ENCODE measurements at regions of chr12 and their contacts with region 1.

Region 1: GRCh38 chr12:7060353-7060954 is at the start of gene C1S:
- DNase-seq: peak; percentile 69 to 90
- ATAC-seq: peak; percentile 96 to 98 (median 97)
- H3K4me3 ChIP-seq: peak within 1 kb of the TSS; percentile 59
- H3K27ac ChIP-seq: peak within 1 kb of the TSS; percentile 69
- H3K4me1 ChIP-seq: peaks cover 4% of the 10 kb centered on the region
- H3K27me3 ChIP-seq: no peaks in the 10 kb centered on the region
- CTCF ChIP-seq: peak; percentile 84
- total RNA-seq, gene C1S: 49.0 to 98.5 (median 75.6) TPM

Region 2: DNA sequence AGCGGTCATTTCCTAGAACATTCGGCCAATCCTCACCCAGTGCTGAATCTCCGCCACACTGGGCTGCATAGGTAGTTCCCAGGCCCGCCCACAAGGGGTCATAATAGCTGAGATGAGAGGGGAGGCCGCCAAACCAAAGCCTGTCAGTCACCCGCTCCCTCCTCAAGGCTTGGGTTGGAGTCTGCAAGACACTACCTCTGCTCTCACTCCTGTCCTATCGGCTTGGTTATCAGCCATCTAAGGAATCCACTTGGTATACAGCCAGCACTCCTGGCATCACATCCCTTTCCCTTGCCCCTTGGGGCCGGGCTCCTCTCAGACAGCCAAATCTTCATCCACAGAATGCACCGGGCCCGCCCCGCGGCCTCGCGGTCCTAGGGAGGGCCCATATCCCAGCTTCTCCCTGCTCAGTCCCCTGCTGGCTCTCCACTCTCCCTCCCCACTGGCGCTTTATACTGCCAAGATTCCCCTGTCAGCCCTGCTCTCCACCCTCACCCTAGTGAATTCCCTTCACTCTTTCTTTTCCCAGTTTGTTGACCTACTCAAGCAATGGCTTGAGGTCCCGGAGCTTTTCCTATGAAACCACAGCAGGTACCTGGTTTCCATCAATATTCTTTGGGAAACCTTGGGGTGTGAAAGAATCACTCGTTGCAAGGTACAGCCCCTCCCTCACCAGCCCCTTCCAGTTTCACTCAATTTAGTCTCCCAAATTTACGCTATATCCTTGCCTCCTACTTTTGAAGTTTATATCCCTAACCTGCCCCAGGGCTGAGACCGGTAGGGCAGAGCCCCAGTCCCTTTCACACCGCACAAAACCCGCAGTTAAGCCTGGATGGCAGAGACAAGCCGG is 506.1 kb before region 1 on chr12:
- intact Hi-C with region 1: no loop called
- DNase-seq: peak; percentile 84 to 89
- ATAC-seq: peak; percentile 41 to 59 (median 50)
- H3K4me3 ChIP-seq: peak overlapping the region; percentile 95
- H3K27ac ChIP-seq: peak overlapping the region; percentile 100
- H3K4me1 ChIP-seq: peaks cover 49% of the 10 kb centered on the region
- H3K27me3 ChIP-seq: no peaks in the 10 kb centered on the region
- CTCF ChIP-seq: peak; percentile 57

Region 3: DNA sequence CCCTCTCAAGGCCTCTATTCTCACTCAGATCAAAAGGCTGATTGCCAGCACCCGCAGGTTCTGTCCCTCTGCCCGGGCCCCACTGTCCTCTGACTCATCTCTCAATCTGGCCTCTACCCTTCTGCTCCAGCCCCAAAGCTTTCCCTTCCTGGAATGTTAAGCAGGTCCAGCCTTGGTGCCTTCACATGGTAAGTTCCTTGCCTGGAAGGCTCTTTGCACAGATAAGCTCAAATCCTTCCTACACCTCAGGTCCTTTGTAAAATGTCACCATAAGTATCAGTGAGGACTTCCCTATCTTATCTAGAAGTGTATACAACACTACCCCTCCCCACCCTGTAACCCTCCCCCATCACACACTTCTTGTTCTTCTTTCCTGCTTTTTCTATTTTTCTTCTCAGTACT is 64.4 kb before region 1 on chr12:
- intact Hi-C with region 1: no loop called
- DNase-seq: peak; percentile 58 to 77
- ATAC-seq: peak; percentile 77 to 85 (median 83)
- H3K4me3 ChIP-seq: no peak overlapping the region
- H3K27ac ChIP-seq: peak overlapping the region; percentile 44
- H3K4me1 ChIP-seq: peaks cover 34% of the 10 kb centered on the region
- H3K27me3 ChIP-seq: no peaks in the 10 kb centered on the region
- CTCF ChIP-seq: no peak

Region 4: DNA sequence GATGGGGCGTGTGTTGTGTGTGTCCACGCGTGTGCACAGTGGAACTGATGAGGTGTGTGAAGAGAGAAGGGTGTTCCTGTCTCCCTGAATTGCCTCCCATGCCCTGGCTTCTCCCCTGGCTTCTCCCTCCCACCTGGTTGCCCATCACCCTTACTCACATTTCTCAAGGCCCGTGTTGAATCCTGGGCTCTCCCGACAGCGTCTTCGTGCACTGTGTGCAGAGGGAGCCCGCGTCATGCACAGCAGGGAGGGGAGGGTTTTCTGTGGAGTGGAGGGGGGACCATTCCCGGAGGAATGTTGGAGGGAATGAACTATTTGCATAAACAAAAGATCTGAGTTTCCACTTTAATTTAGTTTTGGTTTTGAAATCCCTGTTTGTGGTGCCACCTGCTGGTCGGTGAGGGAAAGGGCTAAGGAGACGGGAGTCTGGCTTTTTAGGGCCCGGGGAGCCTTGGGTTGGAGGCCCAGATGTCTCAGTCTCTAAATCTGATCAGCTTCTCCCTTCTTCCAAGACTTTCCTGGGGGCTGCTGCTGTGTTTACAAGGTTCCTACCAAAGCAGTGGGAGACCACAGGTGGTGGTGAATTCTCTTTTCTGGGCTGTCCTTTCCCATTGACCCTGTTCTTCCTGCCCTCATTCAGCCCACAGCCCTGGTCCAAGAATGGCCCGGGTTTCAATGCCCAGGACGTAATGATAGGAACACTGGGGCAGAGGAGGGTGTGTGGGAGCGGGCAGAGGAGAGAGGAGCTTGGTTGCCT is 32.0 kb after region 1 on chr12 and contains the start of gene C1R:
- intact Hi-C with region 1: loop called (anchors 1 to 2 kb)
- DNase-seq: peak; percentile 80 to 89
- ATAC-seq: peak; percentile 57 to 73 (median 63)
- H3K4me3 ChIP-seq: peak within 1 kb of the TSS; percentile 65
- H3K27ac ChIP-seq: peak within 1 kb of the TSS; percentile 58
- H3K4me1 ChIP-seq: peaks cover 11% of the 10 kb centered on the region
- H3K27me3 ChIP-seq: no peaks in the 10 kb centered on the region
- CTCF ChIP-seq: peak; percentile 91
- total RNA-seq, gene C1R: 63.2 to 70.9 (median 68.1) TPM

Region 5: GRCh38 chr12:7108796-7109571 is 48.5 kb after region 1 on chr12 and contains the start of gene C1RL:
- intact Hi-C with region 1: loop called (anchors 1 kb)
- DNase-seq: peak; percentile 93 to 95
- ATAC-seq: peak; percentile 87 to 93 (median 88)
- H3K4me3 ChIP-seq: peak within 1 kb of the TSS; percentile 75
- H3K27ac ChIP-seq: peak within 1 kb of the TSS; percentile 80
- H3K4me1 ChIP-seq: peaks cover 14% of the 10 kb centered on the region
- H3K27me3 ChIP-seq: no peaks in the 10 kb centered on the region
- CTCF ChIP-seq: peak; percentile 98
- total RNA-seq, gene C1RL: 14.6 to 17.0 (median 15.5) TPM

Region 6: DNA sequence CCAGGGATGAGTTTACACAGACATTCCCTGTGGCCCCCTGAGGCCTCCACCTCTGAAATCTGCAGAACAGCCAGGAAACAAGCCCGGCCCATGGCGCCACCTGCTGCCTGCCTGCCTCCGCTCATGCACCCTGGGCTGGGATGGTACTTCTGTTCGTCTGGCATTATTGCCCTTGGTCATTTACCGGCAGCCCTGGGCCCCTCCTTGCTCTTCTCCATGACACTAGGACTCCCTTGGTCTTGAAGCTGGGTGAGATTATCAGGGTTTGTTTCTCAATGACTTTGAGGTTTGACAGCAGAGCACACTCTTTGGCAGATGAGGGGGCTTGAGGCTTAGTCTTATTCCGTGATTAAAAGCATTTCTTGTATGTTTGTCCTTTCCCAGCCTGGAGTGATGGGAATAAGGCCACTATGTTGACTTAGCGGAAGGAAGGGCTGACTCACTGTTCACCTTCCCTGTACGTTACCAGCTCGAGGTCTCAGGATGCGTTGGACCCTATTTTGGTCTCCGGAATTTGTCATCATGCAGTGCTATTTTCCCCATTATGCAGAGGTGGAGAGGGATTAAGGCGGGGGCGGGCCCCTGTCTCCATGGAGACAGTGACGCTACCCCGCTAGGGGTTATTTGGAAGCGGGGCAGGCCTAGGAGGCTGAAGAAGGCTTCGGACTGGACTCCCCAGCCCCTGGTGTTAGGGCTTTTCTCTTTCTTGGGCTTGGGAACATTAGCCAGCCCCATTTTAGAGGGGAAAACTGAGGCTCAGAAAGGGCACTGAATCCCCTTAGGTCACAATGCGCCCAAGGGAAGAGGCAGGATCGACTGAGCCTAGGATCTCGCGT is 128.3 kb after region 1 on chr12:
- intact Hi-C with region 1: loop called in 1 of 2 experiments (anchors 5 kb)
- DNase-seq: peak; percentile 70 to 79
- ATAC-seq: peak; percentile 69 to 83 (median 79)
- H3K4me3 ChIP-seq: peak overlapping the region; percentile 99
- H3K27ac ChIP-seq: peak overlapping the region; percentile 99
- H3K4me1 ChIP-seq: peaks cover 20% of the 10 kb centered on the region
- H3K27me3 ChIP-seq: no peaks in the 10 kb centered on the region
- CTCF ChIP-seq: peak; percentile 52

Region 7: GRCh38 chr12:7219599-7220243 is 159.3 kb after region 1 on chr12:
- intact Hi-C with region 1: no loop called
- DNase-seq: peak; percentile 48 to 69
- ATAC-seq: peak; percentile 36 to 77 (median 53)
- H3K4me3 ChIP-seq: no peak overlapping the region
- H3K27ac ChIP-seq: no peak overlapping the region
- H3K4me1 ChIP-seq: no peaks in the 10 kb centered on the region
- H3K27me3 ChIP-seq: no peaks in the 10 kb centered on the region
- CTCF ChIP-seq: peak; percentile 80

Region 8: GRCh38 chr12:7581046-7581445 is 520.6 kb after region 1 on chr12:
- intact Hi-C with region 1: no loop called
- DNase-seq: no peak
- ATAC-seq: no peak
- H3K4me3 ChIP-seq: no peak overlapping the region
- H3K27ac ChIP-seq: no peak overlapping the region
- H3K4me1 ChIP-seq: no peaks in the 10 kb centered on the region
- H3K27me3 ChIP-seq: no peaks in the 10 kb centered on the region
- CTCF ChIP-seq: no peak

Region 9: GRCh38 chr12:7638760-7639555 is 578.5 kb after region 1 on chr12:
- intact Hi-C with region 1: loop called in 1 of 2 experiments (anchors 5 kb)
- DNase-seq: peak; percentile 53 to 77
- ATAC-seq: peak; percentile 85 to 97 (median 86)
- H3K4me3 ChIP-seq: no peak overlapping the region
- H3K27ac ChIP-seq: no peak overlapping the region
- H3K4me1 ChIP-seq: no peaks in the 10 kb centered on the region
- H3K27me3 ChIP-seq: peaks cover under 1 to 9% (median 2%) of the 10 kb centered on the region in 3 donors
- CTCF ChIP-seq: peak; percentile 86